ENCODE measurements at regions of chr2 and their contacts with region 1.

Region 1: DNA sequence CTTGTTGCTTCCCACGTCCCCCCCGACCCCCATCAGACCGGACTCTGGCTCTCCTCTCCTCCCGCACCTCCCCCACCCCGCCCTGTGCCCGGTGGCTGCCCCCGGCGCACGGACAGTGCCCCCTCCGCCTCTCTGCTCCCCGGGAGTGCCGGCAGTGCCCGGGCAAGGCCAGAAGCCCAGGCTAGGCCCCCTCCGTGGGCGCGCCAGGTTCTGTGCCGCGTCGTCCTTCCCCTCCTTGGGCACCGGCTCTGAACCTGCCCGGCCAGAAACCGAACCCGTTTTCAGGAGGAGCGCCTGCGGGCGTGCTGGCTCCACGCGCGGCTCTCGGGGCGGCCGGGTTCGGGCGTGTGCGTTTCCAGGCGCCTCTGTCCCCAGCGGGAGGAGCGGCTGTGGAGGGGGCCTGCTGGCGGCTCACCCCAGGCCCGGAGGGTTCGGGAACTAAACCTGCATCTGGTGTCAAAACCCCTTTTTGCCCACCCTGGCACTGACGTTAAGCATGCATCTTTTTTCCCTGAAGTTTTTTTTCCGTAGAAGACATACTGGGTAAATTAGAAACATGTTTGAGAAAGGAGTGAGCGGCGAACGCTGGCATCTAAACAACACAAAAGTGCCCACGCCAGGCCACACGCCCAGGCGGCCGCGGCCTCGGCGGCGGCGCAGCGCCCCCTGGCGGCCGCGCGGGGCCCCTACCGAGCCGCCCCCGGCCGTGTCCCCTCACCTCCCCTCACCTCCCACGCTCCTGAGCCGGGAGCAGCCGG is 123.9 kb upstream of the SLC1A4 start:
- DNase-seq: peak; percentile 76 to 86
- ATAC-seq: peak; percentile 90
- H3K4me3 ChIP-seq: peak overlapping the region; percentile 86 to 92
- H3K27ac ChIP-seq: peak overlapping the region in 1 of 2 donors; percentile 62
- H3K4me1 ChIP-seq: no peaks in the 10 kb centered on the region
- H3K27me3 ChIP-seq: no peaks in the 10 kb centered on the region

Region 2: GRCh38 chr2:64644177-64645004 is 220.9 kb before region 1 on chr2:
- intact Hi-C with region 1: loop called (anchors 2 kb)
- DNase-seq: peak; percentile 89 to 92
- ATAC-seq: peak; percentile 91
- H3K4me3 ChIP-seq: peak overlapping the region in 1 of 2 donors; percentile 47
- H3K27ac ChIP-seq: peak overlapping the region in 1 of 2 donors; percentile 26
- H3K4me1 ChIP-seq: peaks cover 0 to 6% of the 10 kb centered on the region in 2 donors
- H3K27me3 ChIP-seq: no peaks in the 10 kb centered on the region

Region 3: GRCh38 chr2:64757126-64757525 is 108.1 kb before region 1 on chr2:
- intact Hi-C with region 1: loop called in 1 of 2 experiments (anchors 5 kb)
- DNase-seq: no peak
- ATAC-seq: no peak
- H3K4me3 ChIP-seq: no peak overlapping the region
- H3K27ac ChIP-seq: no peak overlapping the region
- H3K4me1 ChIP-seq: no peaks in the 10 kb centered on the region
- H3K27me3 ChIP-seq: no peaks in the 10 kb centered on the region

Measured in aorta (tissue), 5 donors.